ENCODE measurements at regions of chr1 and their contacts with region 1.

Region 1: DNA sequence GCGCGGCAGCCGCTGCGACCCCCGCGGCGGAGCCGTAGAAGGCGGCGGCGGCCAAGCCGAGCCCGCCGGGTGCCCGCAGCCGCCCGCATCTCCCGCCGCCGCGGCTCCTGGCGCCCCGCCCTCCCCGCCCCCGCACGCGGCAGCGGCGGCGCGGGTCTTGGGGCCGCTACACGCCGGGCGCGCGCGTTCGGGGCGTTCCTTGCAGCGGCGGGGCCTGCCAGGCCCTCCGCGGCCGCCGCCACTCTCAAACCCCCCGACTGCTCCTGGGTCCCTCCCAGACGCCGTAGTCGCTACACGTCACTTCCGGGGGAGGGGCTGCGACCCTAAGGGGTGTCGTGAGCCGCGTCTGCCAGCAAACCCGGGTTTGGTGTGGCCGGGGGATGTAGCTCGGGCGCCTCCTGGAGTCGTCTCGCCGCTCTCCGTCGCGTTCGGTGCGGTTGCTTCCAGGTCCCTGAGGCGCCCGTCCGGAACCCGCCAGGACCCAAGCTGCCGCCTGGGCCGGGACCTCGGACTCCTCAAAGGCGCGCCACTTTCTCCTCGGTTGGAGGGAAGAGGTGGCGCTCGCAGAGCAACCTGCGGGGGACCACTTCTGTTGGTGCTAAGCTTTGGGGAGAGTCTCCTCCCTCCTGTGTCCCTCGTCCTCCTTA is at the start of gene ELK4:
- DNase-seq: peak; percentile 99
- ATAC-seq: peak; percentile 81
- H3K4me3 ChIP-seq: peak within 1 kb of the TSS; percentile 57 to 94 (median 72)
- H3K4me3 Mint-ChIP-seq: peak within 1 kb of the TSS; percentile 94
- H3K27ac ChIP-seq: peak within 1 kb of the TSS; percentile 85 to 93
- H3K27ac Mint-ChIP-seq: peak within 1 kb of the TSS; percentile 96
- H3K4me1 ChIP-seq: peaks cover 33 to 41% of the 10 kb centered on the region in 2 donors
- H3K4me1 Mint-ChIP-seq: peaks cover 44% of the 10 kb centered on the region
- H3K27me3 ChIP-seq: no peaks in the 10 kb centered on the region
- H3K27me3 Mint-ChIP-seq: no peaks in the 10 kb centered on the region
- CTCF ChIP-seq: peak; percentile 80
- total RNA-seq, gene ELK4: 143 and 151 TPM in 2 replicates

Region 2: DNA sequence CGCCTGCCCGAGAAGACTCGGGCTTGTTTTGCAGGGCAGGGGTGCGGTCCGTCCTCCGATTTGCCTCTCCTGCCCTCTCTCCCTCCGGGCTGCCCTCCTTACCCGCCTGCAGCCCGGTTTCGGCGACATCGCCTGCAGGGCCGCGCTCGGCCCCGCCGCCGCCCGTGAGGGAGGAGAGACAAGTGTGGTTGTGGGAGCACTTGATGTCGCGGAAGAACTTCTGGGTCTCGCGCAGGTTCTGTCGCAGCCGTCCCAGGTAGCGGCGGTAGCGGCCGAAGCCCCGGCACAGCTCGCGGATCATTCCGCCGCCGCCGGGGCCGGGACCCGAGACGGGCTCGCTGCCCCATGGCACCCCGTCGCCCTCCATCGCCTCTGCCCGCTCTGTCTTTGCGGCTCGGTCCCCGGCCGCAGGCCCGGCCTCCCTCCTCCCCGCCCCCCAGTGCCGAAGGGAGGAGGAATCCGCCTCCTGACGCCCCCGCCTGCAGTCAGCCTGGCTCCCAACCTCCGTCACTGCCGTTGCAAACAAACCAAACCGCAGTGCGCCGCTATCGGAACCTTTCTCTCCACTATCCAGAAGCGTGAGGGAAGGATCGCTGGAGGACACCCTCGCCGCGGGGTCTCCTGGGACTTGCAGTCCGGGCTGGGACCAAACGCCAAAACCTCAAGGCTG is 420.5 kb before region 1 on chr1 and contains the start of gene DSTYK:
- CTCF ChIA-PET with region 1: no interaction called
- POLR2A ChIA-PET with region 1: no interaction called
- intact Hi-C with region 1: loop called (anchors 1 kb)
- DNase-seq: peak; percentile 96
- ATAC-seq: peak; percentile 85
- H3K4me3 ChIP-seq: peak within 1 kb of the TSS; percentile 70 to 96 (median 91)
- H3K4me3 Mint-ChIP-seq: peak within 1 kb of the TSS; percentile 96
- H3K27ac ChIP-seq: peak within 1 kb of the TSS; percentile 64 to 75
- H3K27ac Mint-ChIP-seq: peak within 1 kb of the TSS; percentile 96
- H3K4me1 ChIP-seq: peaks cover 22 to 25% of the 10 kb centered on the region in 2 donors
- H3K4me1 Mint-ChIP-seq: peaks cover 48% of the 10 kb centered on the region
- H3K27me3 ChIP-seq: no peaks in the 10 kb centered on the region
- H3K27me3 Mint-ChIP-seq: no peaks in the 10 kb centered on the region
- CTCF ChIP-seq: no peak
- total RNA-seq, gene DSTYK: 15.2 and 15.7 TPM in 2 replicates

Region 3: DNA sequence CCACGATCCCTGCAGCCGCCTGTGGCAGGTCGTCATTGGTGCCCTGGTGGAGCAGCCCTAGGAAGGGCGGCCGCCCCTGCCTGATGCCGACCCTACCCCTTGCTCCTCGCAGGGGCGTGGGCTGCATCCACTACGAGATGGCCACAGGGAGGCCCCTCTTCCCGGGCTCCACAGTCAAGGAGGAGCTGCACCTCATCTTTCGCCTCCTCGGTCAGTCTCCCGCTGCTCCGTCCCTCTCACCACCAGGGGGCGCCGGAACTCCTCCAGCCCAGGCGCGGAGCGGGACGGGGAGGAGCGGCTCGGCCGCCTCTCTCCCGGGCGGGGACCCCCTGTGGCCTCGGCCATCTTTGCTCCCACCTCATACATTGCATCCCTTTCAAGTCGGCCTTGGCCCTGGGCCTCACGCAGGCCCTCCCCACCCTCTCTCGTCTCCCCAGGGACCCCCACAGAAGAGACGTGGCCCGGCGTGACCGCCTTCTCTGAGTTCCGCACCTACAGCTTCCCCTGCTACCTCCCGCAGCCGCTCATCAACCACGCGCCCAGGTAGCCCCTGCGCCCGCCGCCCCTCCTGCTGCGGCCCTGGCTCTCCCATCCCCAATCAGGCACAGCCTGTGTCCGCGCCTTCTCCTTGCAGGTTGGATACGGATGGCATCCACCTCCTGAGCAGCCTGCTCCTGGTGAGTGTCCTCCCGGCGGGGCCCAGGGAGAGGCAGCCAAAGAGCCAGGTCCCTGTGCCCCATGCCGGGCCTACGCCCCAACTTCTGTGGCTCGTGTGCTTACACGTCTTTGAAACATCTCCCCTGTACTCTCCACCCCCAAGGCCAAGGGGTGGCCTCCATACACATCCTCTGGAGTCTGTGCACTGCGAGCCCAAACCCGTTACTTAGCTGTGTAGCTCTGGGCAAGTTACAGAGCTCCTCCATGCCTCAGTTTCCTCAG is 102.7 kb before region 1 on chr1:
- CTCF ChIA-PET with region 1: interaction called, 19 read pairs
- POLR2A ChIA-PET with region 1: interaction called, 3 read pairs
- intact Hi-C with region 1: no loop called
- DNase-seq: peak; percentile 86
- ATAC-seq: peak; percentile 85
- H3K4me3 ChIP-seq: peak overlapping the region in 4 of 5 experiments; percentile 25 to 60 (median 38)
- H3K4me3 Mint-ChIP-seq: peak overlapping the region; percentile 79
- H3K27ac ChIP-seq: no peak overlapping the region
- H3K27ac Mint-ChIP-seq: peak overlapping the region; percentile 26
- H3K4me1 ChIP-seq: peaks cover 4 to 10% of the 10 kb centered on the region in 2 donors
- H3K4me1 Mint-ChIP-seq: peaks cover 7% of the 10 kb centered on the region
- H3K27me3 ChIP-seq: peaks cover 0 to 2% (median 0%) of the 10 kb centered on the region in 4 experiments
- H3K27me3 Mint-ChIP-seq: peaks cover 4% of the 10 kb centered on the region
- CTCF ChIP-seq: peak; percentile 97

Region 4: GRCh38 chr1:205750138-205751035 is 118.5 kb after region 1 on chr1 and contains the start of gene NUCKS1:
- CTCF ChIA-PET with region 1: interaction called, 5 read pairs
- POLR2A ChIA-PET with region 1: interaction called, 4 read pairs
- intact Hi-C with region 1: loop called (anchors 1 kb)
- DNase-seq: peak; percentile 98
- ATAC-seq: peak; percentile 80
- H3K4me3 ChIP-seq: peak within 1 kb of the TSS; percentile 61 to 97 (median 88)
- H3K4me3 Mint-ChIP-seq: peak within 1 kb of the TSS; percentile 95
- H3K27ac ChIP-seq: peak within 1 kb of the TSS; percentile 83 to 95
- H3K27ac Mint-ChIP-seq: peak within 1 kb of the TSS; percentile 97
- H3K4me1 ChIP-seq: peaks cover 22 to 29% of the 10 kb centered on the region in 2 donors
- H3K4me1 Mint-ChIP-seq: peaks cover 33% of the 10 kb centered on the region
- H3K27me3 ChIP-seq: no peaks in the 10 kb centered on the region
- H3K27me3 Mint-ChIP-seq: no peaks in the 10 kb centered on the region
- CTCF ChIP-seq: no peak
- total RNA-seq, gene NUCKS1: 87.6 and 90.1 TPM in 2 replicates

Region 5: DNA sequence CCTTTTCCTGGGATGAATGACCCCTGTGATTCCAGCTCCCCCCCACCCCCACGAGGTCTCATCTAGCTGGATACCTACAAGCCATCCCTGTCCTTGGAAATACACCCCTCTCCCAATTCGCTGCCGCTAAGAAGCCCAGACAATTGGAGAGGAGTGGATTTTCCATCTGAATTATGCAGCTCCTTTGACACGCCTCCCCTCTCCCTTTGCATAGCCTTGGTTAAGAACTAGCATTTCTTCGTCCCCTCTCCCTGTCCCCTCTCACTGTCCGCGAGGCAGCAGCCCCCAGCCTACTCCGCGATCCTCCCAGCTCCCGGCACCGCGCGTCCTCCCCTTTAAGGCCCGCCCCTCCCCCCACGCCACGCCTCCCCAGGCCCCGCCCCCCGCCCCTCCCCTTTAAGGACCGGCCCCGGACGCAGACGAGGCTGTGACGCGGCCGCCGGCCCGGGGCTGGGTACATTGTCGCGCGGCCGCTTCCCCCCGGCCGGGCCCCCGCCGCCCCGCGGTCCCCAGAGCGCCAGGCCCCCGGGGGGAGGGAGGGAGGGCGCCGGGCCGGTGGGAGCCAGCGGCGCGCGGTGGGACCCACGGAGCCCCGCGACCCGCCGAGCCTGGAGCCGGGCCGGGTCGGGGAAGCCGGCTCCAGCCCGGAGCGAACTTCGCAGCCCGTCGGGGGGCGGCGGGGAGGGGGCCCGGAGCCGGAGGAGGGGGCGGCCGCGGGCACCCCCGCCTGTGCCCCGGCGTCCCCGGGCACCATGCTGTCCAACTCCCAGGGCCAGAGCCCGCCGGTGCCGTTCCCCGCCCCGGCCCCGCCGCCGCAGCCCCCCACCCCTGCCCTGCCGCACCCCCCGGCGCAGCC is 1052.9 kb after region 1 on chr1 and contains the start of gene MAPKAPK2:
- CTCF ChIA-PET with region 1: no interaction called
- POLR2A ChIA-PET with region 1: no interaction called
- intact Hi-C with region 1: loop called (anchors 5 kb)
- DNase-seq: peak; percentile 83
- ATAC-seq: peak; percentile 70
- H3K4me3 ChIP-seq: peak within 1 kb of the TSS; percentile 69 to 91 (median 87)
- H3K4me3 Mint-ChIP-seq: peak within 1 kb of the TSS; percentile 100
- H3K27ac ChIP-seq: peak within 1 kb of the TSS; percentile 76 to 86
- H3K27ac Mint-ChIP-seq: peak within 1 kb of the TSS; percentile 96
- H3K4me1 ChIP-seq: peaks cover 54 to 72% of the 10 kb centered on the region in 2 donors
- H3K4me1 Mint-ChIP-seq: peaks cover 82% of the 10 kb centered on the region
- H3K27me3 ChIP-seq: no peaks in the 10 kb centered on the region
- H3K27me3 Mint-ChIP-seq: no peaks in the 10 kb centered on the region
- CTCF ChIP-seq: no peak
- total RNA-seq, gene MAPKAPK2: 85.8 and 91.1 TPM in 2 replicates

Measured in B cell (primary cell).